Thyroid gland (tissue), 4 donors: ENCODE measurements at regions of chr7 and their contacts with region 1.

Region 1: DNA sequence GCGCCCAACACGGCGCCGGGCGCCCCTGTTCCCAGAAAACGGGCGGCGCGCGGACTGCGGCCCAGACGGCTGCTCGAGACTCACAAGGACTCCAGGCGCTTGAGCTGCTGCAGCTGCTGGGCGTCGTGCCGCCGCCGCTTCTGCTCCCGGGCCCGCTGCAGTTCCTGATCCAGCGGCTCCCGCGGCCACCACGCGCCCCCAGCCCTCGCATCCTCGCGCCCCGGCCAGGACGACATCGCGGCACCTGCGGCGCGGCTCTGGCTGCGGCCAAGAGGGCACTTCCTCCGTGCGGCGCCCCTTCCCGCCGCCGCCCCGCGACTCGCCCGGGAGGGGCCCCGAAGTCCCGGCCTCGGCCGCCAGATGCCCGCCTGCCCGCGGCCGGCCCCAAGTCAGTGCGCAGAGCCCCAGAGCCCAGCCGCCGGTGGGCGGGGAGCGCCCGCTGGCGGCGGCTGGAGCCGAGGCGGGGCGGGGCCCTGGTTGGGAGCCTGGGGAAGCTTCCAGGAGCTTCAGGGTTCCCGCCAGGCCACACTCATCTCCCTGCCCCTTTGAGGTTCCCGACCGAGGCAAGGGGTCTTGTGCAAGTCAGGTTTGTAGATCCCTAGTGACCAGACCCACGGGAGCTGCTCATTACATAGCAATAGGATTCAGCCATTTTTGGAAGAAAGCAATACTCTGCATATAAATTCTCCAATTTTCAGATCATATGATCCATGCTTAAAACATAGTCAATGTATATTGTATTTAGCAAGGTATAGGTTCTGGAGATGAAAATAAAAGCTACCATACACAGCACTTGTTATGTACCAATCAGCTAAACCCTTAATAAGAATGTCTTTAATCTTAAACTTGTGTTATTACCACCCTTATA is 14.2 kb upstream of the FKBP9 start:
- DNase-seq: peak; percentile 76 to 81
- H3K4me3 ChIP-seq: peak overlapping the region; percentile 31 to 71 (median 60)
- H3K27ac ChIP-seq: peak overlapping the region; percentile 70 to 98 (median 80)
- H3K4me1 ChIP-seq: peaks cover 6 to 13% of the 10 kb centered on the region in 2 donors
- H3K27me3 ChIP-seq: no peaks in the 10 kb centered on the region
- CTCF ChIP-seq: peak in 3 of 6 experiments; percentile 60 to 80 (median 66)
- POLR2A ChIP-seq: peak in 1 of 2 donors; percentile 69

Region 2: DNA sequence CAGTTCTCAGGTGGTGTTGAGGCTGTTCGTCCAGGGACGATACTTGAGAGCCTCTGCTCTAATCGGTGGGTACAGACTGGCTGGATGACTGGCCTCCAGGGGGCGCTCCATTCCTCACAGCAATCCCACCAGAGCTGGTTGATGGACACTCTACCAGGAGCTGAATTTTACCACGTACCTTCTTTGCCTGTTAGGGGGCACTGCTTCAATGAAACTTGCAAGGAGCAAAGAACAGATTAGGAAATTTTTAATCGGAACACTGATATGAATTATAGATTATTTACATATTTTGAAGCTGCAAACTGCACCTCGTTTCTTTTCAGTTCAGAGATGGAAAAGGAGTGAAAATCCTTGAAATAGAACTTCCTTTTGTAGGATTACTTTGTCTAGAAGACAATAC is 96.3 kb before region 1 on chr7:
- intact Hi-C with region 1: loop called (anchors 10 kb)
- DNase-seq: peak; percentile 91 to 93
- H3K4me3 ChIP-seq: no peak overlapping the region
- H3K27ac ChIP-seq: no peak overlapping the region
- H3K4me1 ChIP-seq: no peaks in the 10 kb centered on the region
- H3K27me3 ChIP-seq: no peaks in the 10 kb centered on the region
- CTCF ChIP-seq: peak; percentile 75 to 95 (median 88)
- POLR2A ChIP-seq: no peak